Left cardiac atrium (tissue), 4 donors: ENCODE measurements at regions of chr2 and their contacts with region 1.

Region 1: DNA sequence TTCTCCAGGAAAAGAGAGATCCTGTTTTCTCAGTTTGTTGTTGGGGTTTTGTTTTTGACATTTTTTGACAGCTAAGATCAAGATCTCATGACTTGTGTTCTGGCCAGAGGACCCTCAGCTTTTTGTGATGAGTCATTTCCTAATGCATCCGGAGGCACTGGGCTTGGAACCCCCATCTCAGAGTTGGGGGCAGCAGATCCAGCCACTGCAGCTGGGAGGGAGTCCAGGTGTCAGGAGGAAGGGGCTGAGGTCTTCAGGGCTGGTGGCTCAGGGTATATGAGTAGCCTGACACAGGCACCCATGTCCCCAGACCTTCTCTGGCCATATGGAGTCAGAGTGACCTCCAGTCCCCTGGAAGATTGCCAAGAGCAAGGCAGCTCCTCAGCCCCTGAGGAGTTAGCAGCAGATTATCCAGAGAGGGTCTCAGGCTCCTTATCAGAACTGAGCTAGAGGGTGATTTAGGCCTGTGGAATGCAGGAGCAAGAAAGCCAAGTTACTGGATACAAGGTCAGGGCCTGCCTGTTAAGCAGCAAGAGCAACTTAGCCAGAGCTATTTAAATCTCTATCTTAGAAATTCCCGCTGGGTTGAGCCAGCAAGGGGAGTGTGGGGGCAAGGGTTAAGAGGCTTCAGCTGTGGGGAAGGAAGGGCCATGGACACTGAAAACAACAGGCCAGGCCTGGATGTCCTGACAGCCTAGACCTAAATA is 62.4 kb downstream of the TANC1 start:
- DNase-seq: peak; percentile 74
- ATAC-seq: peak; percentile 90 to 91

Region 2: DNA sequence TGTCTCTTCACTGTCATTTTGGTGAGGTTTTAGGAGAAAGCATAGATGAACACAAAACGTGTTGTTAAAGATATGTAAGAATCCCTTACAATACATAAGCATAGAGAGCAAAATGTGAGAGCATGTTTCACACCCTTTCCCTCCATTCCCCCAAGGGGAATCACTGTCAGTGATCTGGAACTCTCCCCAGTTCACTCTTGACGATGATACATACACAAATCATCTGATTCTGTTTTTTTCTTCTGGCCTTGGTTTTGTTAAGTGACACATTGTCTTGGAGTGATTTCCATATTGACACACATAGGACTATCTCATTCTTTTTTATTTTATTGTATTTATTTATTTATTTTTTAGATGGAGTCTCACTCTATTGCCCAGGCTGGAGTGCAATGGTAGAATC is 116.1 kb before region 1 on chr2:
- intact Hi-C with region 1: no loop called
- DNase-seq: no peak
- ATAC-seq: no peak

Region 3: GRCh38 chr2:158936978-158937377 is 93.8 kb before region 1 on chr2:
- intact Hi-C with region 1: no loop called
- DNase-seq: no peak
- ATAC-seq: peak; percentile 53 to 84

Region 4: DNA sequence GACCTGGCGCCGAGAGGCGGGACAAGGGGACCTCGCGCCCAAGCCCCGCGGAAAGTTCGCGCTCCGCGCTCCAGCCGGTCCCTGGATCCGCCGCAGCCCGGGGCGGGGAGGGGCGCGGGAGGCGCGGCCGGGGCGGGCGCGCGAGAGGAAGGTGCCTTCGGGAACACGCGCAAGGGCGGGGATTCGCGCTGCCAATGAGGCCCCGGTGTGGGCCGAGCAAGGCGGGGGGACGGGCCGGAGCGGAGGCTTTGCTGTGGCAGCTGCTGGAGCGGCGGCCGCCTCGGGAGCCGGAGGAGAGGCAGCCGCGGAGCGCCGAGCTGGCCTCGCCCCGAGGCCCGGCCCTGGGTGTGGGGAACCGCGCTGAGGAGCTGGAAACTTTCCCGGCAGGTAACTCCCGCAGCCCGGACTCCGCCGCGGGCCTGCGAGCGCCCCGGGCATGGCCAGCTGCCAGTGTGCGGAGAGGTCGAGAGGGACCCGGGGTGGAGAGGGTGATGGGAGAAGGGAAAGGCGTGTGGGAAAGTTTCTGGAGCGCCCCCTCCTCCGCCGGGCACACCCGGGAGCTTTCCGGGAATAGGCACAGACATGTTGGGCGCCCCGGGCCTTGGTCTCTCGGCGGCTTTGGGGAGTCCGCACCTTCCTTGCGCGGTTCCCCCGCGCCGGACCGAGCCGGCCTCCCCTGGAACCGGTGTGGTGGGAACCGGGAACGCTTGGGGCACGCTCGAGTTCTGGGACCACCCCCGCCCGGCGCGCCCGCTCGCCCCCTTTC is 62.2 kb before region 1 on chr2 and contains the start of gene TANC1:
- intact Hi-C with region 1: loop called in 1 of 2 experiments (anchors 5 kb)
- DNase-seq: peak; percentile 96
- ATAC-seq: peak; percentile 96 to 97
- total RNA-seq, gene TANC1: 38.6 to 80.7 TPM

Region 5: DNA sequence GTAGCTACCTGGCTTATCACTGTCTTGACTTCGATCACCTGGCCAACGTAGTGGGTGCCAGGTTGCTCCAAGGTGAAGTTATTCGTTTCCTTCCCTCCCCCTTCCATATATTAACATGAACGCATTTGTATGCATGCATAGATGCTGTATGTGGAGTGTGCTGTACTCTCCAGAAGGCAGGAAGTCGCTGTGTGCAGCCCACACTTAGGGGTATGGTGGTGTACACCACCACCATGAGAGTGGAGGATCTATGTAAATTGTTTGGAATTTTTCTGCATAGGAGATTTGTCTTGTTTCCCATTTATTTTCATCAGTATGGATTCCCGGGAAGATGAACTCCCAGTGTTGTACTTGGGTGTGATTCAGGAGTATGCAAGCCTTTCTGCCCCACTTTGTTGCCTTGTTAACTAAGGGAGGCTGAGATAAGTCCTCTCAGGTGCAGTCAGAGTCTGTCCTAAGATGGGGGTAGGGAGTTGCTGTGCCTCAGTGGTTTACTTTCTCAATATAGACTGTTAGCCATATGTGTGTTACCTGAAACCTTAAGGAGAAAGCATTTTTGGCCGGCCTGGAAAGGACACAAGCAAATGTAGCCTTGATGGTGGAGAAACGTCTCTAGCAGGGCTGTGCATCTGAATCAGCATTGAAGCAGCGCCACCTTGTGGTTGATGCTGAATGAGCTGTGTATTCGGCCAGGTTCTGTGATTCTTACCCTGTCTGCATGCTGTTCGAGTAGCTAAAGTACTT is 87.5 kb after region 1 on chr2:
- intact Hi-C with region 1: loop called in 1 of 2 experiments (anchors 5 kb)
- DNase-seq: peak; percentile 89
- ATAC-seq: peak; percentile 88 to 90